SK-N-SH (cell line): ENCODE measurements at regions of chr3 and their contacts with region 1.

Region 1: DNA sequence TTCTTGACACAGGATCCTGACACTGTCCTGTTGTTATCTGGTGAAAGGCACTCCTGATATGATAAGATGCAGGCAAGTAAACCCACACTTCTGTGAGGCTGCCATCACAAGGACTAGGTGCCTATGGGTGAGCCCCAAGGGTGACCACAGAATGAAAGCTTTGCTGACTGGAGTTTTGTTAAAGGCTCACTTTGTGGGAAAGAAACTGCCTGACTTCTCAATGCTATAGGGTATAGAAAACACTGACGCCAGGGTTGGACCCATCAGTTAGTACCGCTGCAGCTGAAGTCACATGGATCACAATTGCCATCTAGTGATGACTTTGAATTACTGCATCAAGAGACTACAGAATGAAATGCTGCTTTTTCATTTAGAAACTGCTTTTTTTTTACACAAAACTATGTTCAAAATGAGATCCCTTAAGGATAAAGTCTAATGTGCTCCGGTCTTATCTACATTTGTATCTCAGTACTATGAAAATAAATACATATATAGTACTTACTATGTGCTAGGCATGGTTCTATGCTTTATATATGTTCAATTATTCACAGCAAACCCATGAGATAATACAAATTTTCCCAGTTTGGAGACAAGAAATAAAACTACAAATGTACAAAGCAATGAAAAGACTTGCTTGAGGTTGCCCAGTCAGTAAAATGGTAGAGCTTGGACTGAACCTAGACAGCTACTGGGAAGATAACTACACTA is 64.2 kb upstream of the CMSS1 start:
- DNase-seq: peak; percentile 39
- H3K4me3 ChIP-seq: no peak overlapping the region
- H3K27ac ChIP-seq: peak overlapping the region in 1 of 2 experiments; percentile 84; a peak in 1 of 4 replicates
- H3K4me1 ChIP-seq: peaks cover 0 to 8% of the 10 kb centered on the region in 2 experiments; a peak in 2 of 4 replicates
- H3K27me3 ChIP-seq: no peaks in the 10 kb centered on the region
- CTCF ChIP-seq: peak; percentile 89
- EP300 ChIP-seq: no peak
- RAD21 ChIP-seq: peak; percentile 89

Region 2: GRCh38 chr3:99499235-99500158 is 253.9 kb before region 1 on chr3:
- CTCF ChIA-PET with region 1: interaction called, 18 read pairs
- POLR2A ChIA-PET with region 1: no interaction called
- DNase-seq: peak; percentile 24
- H3K4me3 ChIP-seq: no peak overlapping the region; a peak in 1 of 4 replicates
- H3K27ac ChIP-seq: peak overlapping the region in 1 of 2 experiments; percentile 29; a peak in 1 of 4 replicates
- H3K4me1 ChIP-seq: no peaks in the 10 kb centered on the region
- H3K27me3 ChIP-seq: no peaks in the 10 kb centered on the region
- CTCF ChIP-seq: peak; percentile 83
- EP300 ChIP-seq: no peak
- RAD21 ChIP-seq: peak; percentile 59

Region 3: DNA sequence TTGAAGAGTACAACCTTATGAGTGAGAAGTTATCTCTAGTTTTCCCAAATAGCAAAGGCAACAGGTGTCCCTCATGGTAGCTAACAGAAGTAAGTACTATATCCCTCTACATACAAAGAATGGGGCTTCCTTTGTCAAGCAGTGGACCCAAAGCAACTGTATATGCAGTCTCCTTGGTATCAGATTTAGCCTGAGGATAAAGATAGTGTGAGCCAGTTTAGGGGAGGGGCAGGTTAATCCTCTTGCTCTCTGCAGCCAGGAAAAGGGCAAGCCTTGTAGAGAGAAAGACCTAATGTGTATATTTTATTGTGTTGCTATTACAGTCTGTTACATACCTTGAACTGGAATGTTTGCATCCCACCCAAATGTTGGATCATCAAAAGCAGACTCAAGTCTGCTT is 232.9 kb before region 1 on chr3:
- CTCF ChIA-PET with region 1: no interaction called
- POLR2A ChIA-PET with region 1: no interaction called
- DNase-seq: no peak
- H3K4me3 ChIP-seq: no peak overlapping the region
- H3K27ac ChIP-seq: no peak overlapping the region
- H3K4me1 ChIP-seq: no peaks in the 10 kb centered on the region
- H3K27me3 ChIP-seq: no peaks in the 10 kb centered on the region; the same call in 1 of the 2 replicates
- CTCF ChIP-seq: no peak
- EP300 ChIP-seq: no peak
- RAD21 ChIP-seq: no peak

Region 4: GRCh38 chr3:99645277-99646106 is 107.9 kb before region 1 on chr3:
- CTCF ChIA-PET with region 1: interaction called, 19 read pairs
- POLR2A ChIA-PET with region 1: no interaction called
- DNase-seq: peak; percentile 23
- H3K4me3 ChIP-seq: peak overlapping the region in 1 of 2 experiments; percentile 31; a peak in 1 of 4 replicates
- H3K27ac ChIP-seq: peak overlapping the region; percentile 29 to 50; a peak in 2 of 4 replicates
- H3K4me1 ChIP-seq: no peaks in the 10 kb centered on the region; a peak in 2 of 4 replicates
- H3K27me3 ChIP-seq: peaks cover 10% of the 10 kb centered on the region; the same call in 1 of the 2 replicates
- CTCF ChIP-seq: peak; percentile 84
- EP300 ChIP-seq: no peak
- RAD21 ChIP-seq: peak; percentile 46

Region 5: DNA sequence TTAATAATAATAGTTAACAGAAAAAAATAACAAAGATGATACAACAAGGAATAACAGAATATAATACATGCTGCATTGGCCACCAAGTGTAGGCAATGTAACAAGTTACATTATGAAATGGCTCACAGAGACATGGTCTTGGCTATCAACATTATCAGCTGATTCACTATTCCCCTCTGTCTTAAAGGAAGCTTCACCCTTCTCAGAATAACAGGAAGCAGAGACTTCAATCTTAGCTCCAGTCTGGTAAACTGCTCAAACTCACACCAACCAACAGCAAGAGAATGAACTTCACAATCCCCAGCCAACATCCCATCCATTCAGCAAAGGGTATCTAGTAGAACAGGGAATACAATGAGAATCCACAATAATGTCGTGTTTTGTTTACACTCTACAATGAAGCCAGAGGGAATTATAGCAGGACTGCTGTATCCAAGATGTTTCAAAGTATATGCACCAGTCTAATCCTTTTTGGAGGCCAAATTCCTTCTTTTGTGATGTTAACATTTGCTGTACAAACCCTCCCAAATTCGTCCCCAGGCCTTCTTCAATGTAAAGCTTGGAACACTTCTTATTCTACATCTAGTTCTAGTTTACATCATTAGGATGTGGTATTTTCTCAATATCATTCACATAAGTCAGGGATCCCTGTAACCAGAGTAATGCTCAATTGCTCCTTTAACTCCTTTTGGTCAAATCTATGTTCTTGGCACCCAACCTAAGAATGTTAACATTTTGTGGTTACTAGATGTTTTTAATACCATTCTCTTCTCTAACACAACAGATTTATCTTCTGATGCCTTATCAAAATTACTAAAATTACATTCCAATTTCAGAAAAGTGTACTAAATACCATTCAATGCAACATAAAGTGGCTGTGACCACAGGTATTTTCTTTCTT is 11.9 kb after region 1 on chr3:
- CTCF ChIA-PET with region 1: interaction called, 35 read pairs
- POLR2A ChIA-PET with region 1: no interaction called
- DNase-seq: no peak
- H3K4me3 ChIP-seq: no peak overlapping the region
- H3K27ac ChIP-seq: peak overlapping the region; percentile 8 to 34; a peak in 2 of 4 replicates
- H3K4me1 ChIP-seq: no peaks in the 10 kb centered on the region; a peak in 1 of 4 replicates
- H3K27me3 ChIP-seq: no peaks in the 10 kb centered on the region
- CTCF ChIP-seq: no peak
- EP300 ChIP-seq: no peak
- RAD21 ChIP-seq: no peak